ENCODE measurements at regions of chr4 and their contacts with region 1.

Region 1: DNA sequence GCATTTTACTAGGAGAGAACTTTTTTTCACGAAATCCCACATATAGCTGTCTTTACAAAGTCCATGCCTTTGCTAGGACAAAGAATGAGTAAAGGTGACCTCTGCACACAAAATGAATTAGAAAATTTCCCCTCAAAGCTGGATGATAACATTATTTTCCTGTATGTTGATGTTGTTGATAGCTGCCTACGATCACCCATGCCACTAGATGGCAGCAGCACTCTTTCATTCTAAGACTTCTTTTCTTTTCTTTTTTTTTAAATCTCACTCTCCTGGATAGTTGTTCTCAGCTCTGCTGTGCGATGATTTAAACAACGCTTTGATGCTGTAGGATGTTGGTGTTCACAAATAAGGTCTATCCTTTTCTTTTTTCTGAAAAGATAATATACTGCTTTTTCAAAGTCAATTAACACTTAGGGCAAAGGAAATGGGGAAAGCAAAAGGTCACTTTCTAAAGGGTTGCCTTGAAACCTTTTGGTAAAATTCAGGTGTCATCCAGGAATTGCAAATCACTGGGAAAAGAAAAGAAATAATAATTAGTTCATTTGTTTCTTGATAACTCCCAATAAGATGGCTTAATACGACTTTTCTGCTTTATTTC is 266.8 kb downstream of the C4orf33 start:
- DNase-seq: peak; percentile 37 to 83 (median 65)
- H3K4me3 ChIP-seq: no peak overlapping the region
- H3K27ac ChIP-seq: no peak overlapping the region
- H3K4me1 ChIP-seq: no peaks in the 10 kb centered on the region
- H3K27me3 ChIP-seq: no peaks in the 10 kb centered on the region
- CTCF ChIP-seq: peak; percentile 59 to 89 (median 82)
- POLR2A ChIP-seq: no peak

Region 2: DNA sequence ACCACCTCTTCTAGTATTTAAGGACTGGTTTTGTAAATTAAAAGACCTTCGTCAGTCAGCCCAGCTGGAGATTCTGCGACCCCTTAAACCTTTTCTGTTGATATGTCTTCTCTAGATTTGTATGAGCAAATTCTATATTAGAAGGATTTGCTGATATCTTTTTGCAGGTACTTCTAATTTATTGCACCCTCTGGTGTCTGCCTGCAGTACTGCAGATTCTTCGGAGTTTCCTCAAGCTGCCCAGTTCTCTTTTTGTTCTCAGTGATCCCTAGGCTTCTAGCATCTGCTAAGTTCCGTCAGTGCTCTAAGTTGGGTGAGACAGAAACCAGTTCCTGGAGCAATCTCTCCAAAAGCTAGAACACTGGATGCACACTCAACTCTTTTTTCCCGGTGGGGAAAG is 278.4 kb after region 1 on chr4:
- intact Hi-C with region 1: loop called (anchors 5 to 10 kb)
- DNase-seq: peak; percentile 44 to 87 (median 72)
- H3K4me3 ChIP-seq: no peak overlapping the region
- H3K27ac ChIP-seq: no peak overlapping the region
- H3K4me1 ChIP-seq: no peaks in the 10 kb centered on the region
- H3K27me3 ChIP-seq: no peaks in the 10 kb centered on the region
- CTCF ChIP-seq: peak; percentile 62 to 82 (median 76)
- POLR2A ChIP-seq: no peak